ENCODE measurements at regions of chr2 and their contacts with region 1.

Region 1: DNA sequence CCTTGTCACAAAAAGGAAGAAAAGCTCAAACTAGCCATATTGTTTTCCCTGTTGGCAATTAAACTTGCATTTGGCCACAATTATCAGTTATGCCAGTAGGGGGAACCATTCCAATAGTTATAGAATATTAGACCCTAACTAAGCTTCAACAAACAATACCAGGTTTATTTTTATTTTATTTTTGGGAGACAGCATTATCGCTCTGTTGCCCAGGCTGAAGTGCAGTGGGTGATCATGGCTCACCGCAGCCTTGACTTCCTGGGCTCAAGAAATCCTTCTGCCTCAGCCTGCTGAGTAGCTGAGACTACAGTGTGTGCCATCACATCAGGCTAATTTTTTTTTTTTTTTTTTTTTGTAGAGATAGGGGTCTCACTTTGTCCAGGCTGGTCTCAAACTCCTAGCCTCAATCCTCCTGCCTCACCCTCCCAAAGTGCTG is 102.1 kb downstream of the ATAD2B start:
- DNase-seq: no peak
- H3K4me3 ChIP-seq: no peak overlapping the region
- H3K27me3 ChIP-seq: no peaks in the 10 kb centered on the region
- CTCF ChIP-seq: peak; percentile 63

Region 2: DNA sequence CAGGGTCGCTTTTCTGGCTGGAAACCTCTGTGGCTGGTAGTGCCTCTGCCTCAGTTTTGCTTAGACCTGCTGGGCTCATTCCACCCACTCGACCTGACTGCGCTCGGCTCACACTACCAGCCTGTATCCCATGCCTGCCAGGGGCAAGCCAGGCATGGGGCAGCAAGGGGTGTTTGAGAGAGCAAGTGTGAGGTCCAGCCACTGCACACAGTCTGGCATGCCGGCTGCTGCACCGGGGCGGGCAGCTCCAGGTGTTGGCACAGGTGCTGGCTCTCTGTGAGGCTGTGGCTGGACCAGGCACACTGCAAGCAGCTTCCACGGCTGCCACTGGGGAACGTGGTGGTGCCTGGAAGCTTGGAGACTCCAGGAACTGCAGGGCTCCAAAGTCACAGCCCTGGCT is 11.2 kb after region 1 on chr2:
- CTCF ChIA-PET with region 1: interaction called, 11 read pairs
- POLR2A ChIA-PET with region 1: no interaction called
- DNase-seq: no peak
- H3K4me3 ChIP-seq: no peak overlapping the region
- H3K27me3 ChIP-seq: no peaks in the 10 kb centered on the region
- CTCF ChIP-seq: no peak